Common myeloid progenitor, CD34-positive (primary cell): ENCODE measurements at regions of chr5 and their contacts with region 1.

Region 1: GRCh38 chr5:138963763-138964371 is 88.7 kb upstream of the LRRTM2 start:
- DNase-seq: no peak
- H3K4me3 ChIP-seq: no peak overlapping the region
- H3K27ac ChIP-seq: no peak overlapping the region
- H3K4me1 ChIP-seq: peaks cover 0 to 37% (median 14%) of the 10 kb centered on the region in 4 experiments
- H3K27me3 ChIP-seq: no peaks in the 10 kb centered on the region

Region 2: GRCh38 chr5:138824924-138825863 is 138.7 kb before region 1 on chr5:
- CTCF ChIA-PET with region 1: no interaction called
- POLR2A ChIA-PET with region 1: no interaction called
- DNase-seq: peak; percentile 24 to 44 (median 36)
- H3K4me3 ChIP-seq: no peak overlapping the region
- H3K27ac ChIP-seq: no peak overlapping the region
- H3K4me1 ChIP-seq: peaks cover 0 to 6% (median 0%) of the 10 kb centered on the region in 4 experiments
- H3K27me3 ChIP-seq: no peaks in the 10 kb centered on the region

Region 3: DNA sequence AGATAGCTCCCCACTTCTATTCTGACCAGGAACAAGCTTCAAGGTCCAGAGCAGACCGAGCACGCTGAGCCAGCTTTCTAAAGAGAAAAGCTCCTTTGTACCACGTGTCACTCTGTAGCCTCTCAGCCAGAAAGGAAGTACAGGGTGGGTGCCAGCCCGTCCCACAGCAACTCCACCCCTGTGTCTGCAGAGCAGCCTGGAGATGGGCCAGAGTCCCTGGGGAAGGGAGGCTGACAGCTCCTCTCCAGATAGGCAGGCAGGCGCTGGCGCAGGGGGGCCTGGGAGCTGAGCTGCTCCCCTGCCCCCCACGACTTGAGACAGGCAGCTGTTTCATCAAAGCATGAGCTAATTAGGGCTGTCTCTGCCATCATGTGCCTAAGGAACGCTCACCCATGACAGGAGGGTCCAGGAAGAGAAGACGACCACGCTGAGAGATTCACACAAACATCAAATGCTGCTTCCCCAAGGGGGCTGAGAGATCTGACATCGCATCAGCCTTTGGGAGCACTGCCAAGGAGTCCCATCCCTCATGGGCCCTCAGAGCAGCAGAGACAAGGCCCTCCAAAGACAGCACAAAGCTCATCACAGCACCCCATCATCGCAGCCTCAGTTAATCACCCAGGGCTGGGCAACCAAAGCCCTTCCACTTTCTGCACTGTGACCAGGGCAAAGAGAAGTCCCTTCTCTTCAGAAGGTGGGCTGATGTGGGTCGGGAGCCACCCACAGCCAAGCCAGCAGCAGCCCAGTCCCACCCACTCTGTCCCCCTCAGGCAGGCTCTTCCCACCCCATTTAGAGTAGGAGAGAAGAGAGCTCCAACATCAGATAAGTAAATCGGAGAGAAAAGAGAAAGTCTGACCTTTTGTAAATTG is 10.2 kb before region 1 on chr5:
- CTCF ChIA-PET with region 1: interaction called, 21 read pairs
- POLR2A ChIA-PET with region 1: interaction called, 3 read pairs
- DNase-seq: peak; percentile 47 to 80 (median 72)
- H3K4me3 ChIP-seq: peak overlapping the region in 1 of 7 experiments; percentile 24
- H3K27ac ChIP-seq: no peak overlapping the region
- H3K4me1 ChIP-seq: peaks cover 0 to 34% (median 21%) of the 10 kb centered on the region in 4 experiments
- H3K27me3 ChIP-seq: no peaks in the 10 kb centered on the region